Breast epithelium (tissue), 4 donors: ENCODE measurements at regions of chr14 and their contacts with region 1.

Region 1: GRCh38 chr14:45242706-45243105 is 10.3 kb downstream of the MIS18BP1 start:
- DNase-seq: no peak
- H3K4me3 ChIP-seq: peak overlapping the region in 2 of 3 donors; percentile 9 to 40
- H3K27ac ChIP-seq: peak overlapping the region; percentile 15 to 35
- H3K4me1 ChIP-seq: no peaks in the 10 kb centered on the region
- H3K27me3 ChIP-seq: no peaks in the 10 kb centered on the region
- CTCF ChIP-seq: no peak
- POLR2A ChIP-seq: no peak

Region 2: GRCh38 chr14:45253068-45253753 is 10.5 kb after region 1 on chr14 and contains the start of gene MIS18BP1:
- intact Hi-C with region 1: loop called (anchors 1 kb)
- DNase-seq: peak; percentile 90 to 93
- H3K4me3 ChIP-seq: peak within 1 kb of the TSS; percentile 69 to 96 (median 84)
- H3K27ac ChIP-seq: peak within 1 kb of the TSS; percentile 93 to 94
- H3K4me1 ChIP-seq: no peaks in the 10 kb centered on the region
- H3K27me3 ChIP-seq: no peaks in the 10 kb centered on the region
- CTCF ChIP-seq: peak; percentile 54 to 85 (median 82)
- POLR2A ChIP-seq: no peak
- total RNA-seq, gene MIS18BP1: 46.7 to 64.4 (median 48.5) TPM